ENCODE measurements at regions of chr5 and their contacts with region 1.

Region 1: DNA sequence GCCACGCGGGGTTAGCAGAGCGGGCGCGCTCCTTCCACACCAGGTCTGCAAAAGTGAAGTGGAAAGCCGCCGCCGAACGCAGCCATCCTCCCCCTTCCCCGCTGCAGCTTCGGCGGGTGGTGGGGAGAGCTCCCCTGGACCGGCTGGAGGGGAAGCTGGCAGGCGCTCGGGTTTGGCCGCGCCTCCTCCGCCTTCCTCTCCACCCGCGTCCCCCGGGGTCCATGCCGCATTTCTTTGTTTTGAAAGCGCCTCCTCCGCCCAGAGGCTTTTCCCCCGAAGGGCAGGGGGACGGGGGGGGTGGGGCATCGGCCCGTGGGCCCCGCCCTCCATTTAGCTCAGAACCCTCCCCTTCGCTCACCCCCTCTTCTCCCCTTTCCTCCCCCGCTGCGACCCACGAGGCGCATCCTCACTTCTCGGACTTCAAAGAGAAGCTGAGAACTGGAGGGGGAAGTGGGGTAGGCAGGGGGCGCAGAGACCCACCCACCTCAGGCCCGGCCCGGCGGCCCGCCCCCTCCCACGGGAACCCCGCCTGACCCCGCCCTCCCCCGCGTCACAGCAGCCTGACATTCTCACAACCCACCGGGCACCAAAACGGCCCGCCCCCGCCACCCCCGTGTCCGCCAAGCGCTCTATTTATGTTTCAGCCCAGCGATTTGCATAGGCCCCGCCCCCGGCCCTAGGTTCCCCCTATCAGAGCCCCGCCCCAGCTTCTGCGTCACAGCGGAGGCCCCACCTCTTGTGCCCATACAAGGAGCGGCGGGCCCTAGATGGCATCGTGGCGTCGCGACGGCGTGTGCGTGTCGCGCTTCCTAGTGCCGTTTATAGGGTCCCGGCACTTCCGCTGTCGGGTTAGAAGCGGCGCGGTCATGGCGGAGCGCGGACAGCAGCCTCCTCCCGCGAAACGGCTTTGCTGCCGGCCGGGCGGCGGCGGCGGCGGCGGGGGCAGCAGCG is at the start of gene ZSWIM6:
- DNase-seq: peak; percentile 100
- H3K4me3 ChIP-seq: peak within 1 kb of the TSS; percentile 95 to 97
- H3K27ac ChIP-seq: peak within 1 kb of the TSS; percentile 97 to 98
- H3K4me1 ChIP-seq: no peaks in the 10 kb centered on the region
- H3K27me3 ChIP-seq: no peaks in the 10 kb centered on the region
- CTCF ChIP-seq: peak in 1 of 4 experiments; percentile 14
- POLR2A ChIP-seq: peak; percentile 94
- total RNA-seq, gene ZSWIM6: 8.7 to 13.7 TPM

Region 2: DNA sequence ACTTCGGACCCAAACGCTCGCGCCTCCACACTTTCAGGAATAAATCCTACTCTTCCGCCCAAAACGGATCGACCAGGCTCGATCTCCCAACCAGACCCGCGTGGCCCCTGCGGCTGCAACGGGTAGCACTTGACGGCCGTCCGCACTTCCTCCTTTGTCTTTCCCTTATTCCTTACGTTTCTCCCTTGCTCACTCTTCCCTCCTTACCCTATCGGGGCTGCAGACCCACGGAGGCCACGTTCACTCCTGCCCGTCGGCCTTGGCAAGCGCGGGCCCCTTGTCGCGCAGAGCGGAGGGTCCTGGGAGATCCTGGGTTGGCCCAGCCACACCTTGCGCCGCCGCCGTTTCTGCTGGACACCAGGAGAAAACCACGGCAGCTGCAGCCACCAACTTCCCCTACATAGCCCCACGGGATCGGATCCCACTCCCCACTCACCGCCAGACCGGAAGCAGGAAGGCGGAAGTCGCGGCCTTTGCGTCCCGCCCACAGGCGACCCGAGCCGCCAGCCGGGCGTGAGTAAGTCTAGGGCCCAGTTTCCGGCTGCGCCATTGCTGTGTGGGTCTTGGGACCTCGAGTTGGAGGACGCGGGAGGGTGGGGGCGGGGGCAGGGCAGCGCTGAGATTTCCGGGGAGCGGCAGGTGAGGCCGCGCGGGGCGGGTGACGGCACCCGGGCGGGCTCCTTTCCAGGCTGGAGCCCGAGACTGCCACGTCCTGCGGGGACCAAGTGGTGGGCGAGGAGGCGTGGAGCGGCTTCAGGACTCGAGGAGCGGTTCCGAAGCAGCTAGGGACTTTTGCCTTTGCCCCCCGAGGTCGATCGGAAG is 169.5 kb before region 1 on chr5 and contains the start of gene SMIM15:
- intact Hi-C with region 1: loop called (anchors 2 kb)
- DNase-seq: peak; percentile 89
- H3K4me3 ChIP-seq: peak within 1 kb of the TSS; percentile 84 to 86
- H3K27ac ChIP-seq: peak within 1 kb of the TSS; percentile 95
- H3K4me1 ChIP-seq: no peaks in the 10 kb centered on the region
- H3K27me3 ChIP-seq: no peaks in the 10 kb centered on the region
- CTCF ChIP-seq: peak in 1 of 4 experiments; percentile 15
- POLR2A ChIP-seq: peak; percentile 55
- total RNA-seq, gene SMIM15: 30.0 to 53.1 TPM

Region 3: DNA sequence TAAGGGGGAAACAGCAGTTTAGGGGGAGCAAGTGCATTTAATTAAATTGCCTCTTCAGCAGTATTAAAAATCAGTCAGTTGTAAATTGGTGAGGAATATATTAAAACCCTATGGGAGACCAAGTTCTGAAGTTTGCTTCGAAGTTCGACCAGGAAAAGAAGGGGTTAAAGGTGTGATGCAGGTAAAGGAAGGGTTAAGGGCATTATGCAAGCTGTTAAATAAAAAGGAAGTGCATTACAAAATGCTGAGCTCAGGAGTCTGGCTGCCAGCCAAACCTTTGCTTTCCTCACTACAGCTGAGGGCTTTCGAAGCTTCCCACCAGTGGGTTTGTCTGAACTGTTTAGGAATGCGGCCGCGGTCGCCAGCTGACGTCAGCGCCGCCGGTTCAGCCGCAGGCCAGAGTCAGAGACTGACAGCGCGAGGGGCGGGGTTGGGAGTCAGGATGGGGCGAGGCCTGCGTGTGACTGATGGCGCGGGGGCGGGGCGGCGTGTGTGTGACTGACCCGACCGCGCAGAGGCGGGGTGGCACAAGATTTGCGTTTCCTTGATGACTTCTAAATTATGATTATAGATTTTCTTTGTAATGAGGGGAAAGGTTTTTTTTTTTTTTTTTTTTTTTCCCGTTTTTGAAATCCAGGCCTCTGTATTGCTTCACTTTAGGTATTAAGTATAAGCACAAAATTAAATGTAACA is 76.9 kb after region 1 on chr5:
- intact Hi-C with region 1: loop called (anchors 5 kb)
- DNase-seq: peak; percentile 98
- H3K4me3 ChIP-seq: peak overlapping the region; percentile 7 to 35
- H3K27ac ChIP-seq: peak overlapping the region in 1 of 2 donors; percentile 55
- H3K4me1 ChIP-seq: peaks cover 10% of the 10 kb centered on the region
- H3K27me3 ChIP-seq: no peaks in the 10 kb centered on the region
- CTCF ChIP-seq: peak in 2 of 4 experiments; percentile 2 to 9
- POLR2A ChIP-seq: no peak

Region 4: DNA sequence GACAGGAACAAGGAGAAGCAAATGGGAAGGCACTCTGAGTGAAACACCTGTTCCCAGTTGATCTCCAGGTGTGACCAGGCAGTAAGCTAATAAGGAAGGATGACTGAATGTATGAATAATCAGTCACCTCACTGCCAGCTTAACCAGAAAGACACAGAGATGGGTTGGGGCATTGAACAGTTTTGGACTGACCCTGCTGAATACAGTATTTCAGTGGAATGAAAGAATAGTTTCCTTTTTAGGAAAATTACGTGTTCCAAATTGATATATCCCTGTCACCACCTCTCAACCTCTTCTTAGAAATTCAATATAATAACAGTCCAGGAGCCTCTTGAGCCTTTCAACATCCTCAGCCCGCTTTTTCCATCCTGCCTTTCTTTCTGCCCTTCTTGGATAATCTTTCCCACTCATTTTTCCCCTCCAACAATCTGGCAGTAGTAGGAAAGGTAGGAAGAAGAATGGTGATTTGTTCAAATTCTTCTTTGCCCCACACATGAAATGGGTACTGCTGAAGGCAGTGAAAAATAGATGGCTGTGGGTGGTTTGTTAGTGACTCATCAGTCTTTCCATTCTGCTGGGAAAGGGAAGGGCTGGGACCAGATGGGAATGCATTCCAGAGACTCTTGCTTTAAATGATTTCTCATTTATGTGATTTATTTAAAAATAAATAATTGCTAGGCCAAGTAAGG is 118.3 kb after region 1 on chr5:
- intact Hi-C with region 1: no loop called
- DNase-seq: no peak
- H3K4me3 ChIP-seq: no peak overlapping the region
- H3K27ac ChIP-seq: no peak overlapping the region
- H3K4me1 ChIP-seq: peaks cover 7% of the 10 kb centered on the region
- H3K27me3 ChIP-seq: no peaks in the 10 kb centered on the region
- CTCF ChIP-seq: no peak
- POLR2A ChIP-seq: no peak

Region 5: DNA sequence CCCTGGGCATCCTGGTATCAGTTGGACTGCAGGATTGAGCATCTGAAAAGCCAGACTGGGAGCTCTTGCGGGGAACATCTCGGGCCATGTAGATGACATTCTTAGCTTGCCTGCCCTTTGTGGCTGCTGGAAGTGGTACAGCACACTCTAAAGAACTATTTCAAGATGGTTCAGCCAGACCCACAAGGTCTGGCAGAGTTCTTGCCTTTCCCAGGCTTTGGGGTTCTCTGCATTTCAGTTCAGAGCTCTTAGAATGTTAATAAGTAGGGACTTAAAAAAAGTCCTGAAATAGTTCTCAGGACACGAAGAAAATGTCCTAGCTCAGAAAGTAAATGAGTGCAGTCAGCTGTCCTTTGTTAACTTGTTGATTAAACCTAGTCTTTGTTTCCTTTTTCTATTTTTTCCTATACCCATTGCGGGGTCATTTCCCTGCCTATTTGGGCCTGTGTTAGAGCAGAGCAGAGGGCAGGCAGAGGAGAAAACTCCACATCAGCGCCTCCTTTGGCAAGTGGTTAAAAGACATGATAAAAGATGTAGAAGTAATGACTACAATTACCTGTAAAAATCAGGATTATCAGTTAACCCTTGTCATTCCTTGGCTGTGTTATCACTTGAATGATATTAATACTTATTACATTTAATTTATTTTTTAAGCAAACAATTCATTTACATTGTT is 291.9 kb after region 1 on chr5:
- intact Hi-C with region 1: loop called (anchors 5 kb)
- DNase-seq: no peak
- H3K4me3 ChIP-seq: no peak overlapping the region
- H3K27ac ChIP-seq: peak overlapping the region; percentile 2 to 24
- H3K4me1 ChIP-seq: peaks cover 16% of the 10 kb centered on the region
- H3K27me3 ChIP-seq: no peaks in the 10 kb centered on the region
- CTCF ChIP-seq: no peak
- POLR2A ChIP-seq: no peak

Region 6: DNA sequence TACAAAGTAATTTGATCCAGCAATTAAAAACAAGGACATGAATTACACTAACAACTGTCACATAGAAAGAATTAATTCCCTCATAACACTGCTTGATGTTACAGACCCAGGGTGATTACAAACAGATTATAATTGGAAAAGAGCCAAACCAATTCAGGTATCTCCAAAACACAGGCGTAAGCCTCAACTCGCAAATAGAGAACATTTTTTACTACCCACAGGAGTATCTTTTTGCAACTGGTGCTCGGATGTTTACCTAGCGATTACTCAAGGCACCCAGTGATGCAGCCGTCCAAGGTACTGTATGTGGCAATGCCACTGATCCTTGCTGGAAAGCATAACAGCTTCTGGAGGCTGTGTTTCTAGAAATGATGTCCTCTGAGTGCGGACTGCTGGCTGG is 588.2 kb after region 1 on chr5:
- intact Hi-C with region 1: loop called (anchors 10 kb)
- DNase-seq: peak; percentile 82
- H3K4me3 ChIP-seq: no peak overlapping the region
- H3K27ac ChIP-seq: no peak overlapping the region
- H3K4me1 ChIP-seq: no peaks in the 10 kb centered on the region
- H3K27me3 ChIP-seq: no peaks in the 10 kb centered on the region
- CTCF ChIP-seq: no peak
- POLR2A ChIP-seq: no peak